Calu3 (cell line): ENCODE measurements at regions of chr4 and their contacts with region 1.

Region 1: DNA sequence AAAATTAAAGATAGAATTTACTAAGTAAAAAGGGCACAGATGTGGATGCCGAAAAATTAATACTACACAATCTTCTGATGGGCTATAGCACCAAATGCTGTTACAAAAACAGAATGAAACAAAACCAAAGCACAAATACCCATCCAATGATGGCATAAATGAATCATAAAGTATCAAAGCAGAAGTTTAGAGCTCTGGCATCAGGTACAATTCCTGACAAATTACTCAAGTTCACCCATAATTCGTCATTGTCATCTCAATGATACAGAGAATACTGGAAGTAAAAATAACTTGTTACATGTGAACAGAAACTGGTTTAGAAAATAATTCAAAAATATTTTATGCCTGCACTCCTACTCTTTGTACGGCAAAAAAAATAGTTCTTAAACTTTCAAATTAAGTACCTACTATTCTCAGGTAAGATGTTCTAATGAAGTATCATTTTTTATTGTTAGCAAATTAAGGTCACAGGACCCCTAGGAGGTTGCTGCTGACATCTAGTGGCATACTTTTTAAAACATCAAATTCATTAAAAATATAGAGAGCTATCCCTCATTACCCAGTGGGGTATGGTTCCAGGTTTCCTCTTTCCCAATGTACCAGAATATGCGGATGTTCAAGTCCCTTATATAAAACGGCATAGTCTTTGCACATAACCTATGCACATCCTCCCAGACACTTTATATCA is 126.1 kb downstream of the INPP4B start:
- DNase-seq: no peak
- H3K4me3 Mint-ChIP-seq: no peak overlapping the region
- H3K27ac Mint-ChIP-seq: no peak overlapping the region
- H3K4me1 Mint-ChIP-seq: peaks cover 15% of the 10 kb centered on the region
- H3K27me3 Mint-ChIP-seq: no peaks in the 10 kb centered on the region
- CTCF ChIP-seq: no peak

Region 2: GRCh38 chr4:142549726-142550463 is 170.1 kb before region 1 on chr4:
- CTCF ChIA-PET with region 1: no interaction called
- intact Hi-C with region 1: loop called (anchors 5 kb)
- DNase-seq: peak; percentile 72
- H3K4me3 Mint-ChIP-seq: no peak overlapping the region
- H3K27ac Mint-ChIP-seq: peak overlapping the region; percentile 99
- H3K4me1 Mint-ChIP-seq: peaks cover 62% of the 10 kb centered on the region
- H3K27me3 Mint-ChIP-seq: no peaks in the 10 kb centered on the region
- CTCF ChIP-seq: no peak

Region 3: DNA sequence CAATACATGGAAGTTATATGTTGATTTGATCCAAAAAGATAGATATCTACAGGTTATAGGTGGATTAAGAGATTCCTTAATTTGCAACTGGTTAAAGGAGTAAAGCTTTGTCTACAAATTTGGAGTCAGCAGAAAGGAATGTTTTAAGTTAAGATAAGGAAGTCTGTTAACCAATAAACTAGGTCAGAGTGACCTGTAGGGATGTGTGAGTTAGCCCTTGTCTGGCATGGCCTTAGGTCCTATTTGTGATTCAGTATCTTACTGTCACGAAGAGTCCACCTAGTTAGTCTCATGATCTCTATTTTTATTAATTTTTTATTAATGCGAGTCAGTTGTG is 104.7 kb before region 1 on chr4:
- CTCF ChIA-PET with region 1: no interaction called
- intact Hi-C with region 1: loop called (anchors 2 kb)
- DNase-seq: no peak
- H3K4me3 Mint-ChIP-seq: peak overlapping the region; percentile 31
- H3K27ac Mint-ChIP-seq: peak overlapping the region; percentile 91
- H3K4me1 Mint-ChIP-seq: peaks cover 28% of the 10 kb centered on the region
- H3K27me3 Mint-ChIP-seq: no peaks in the 10 kb centered on the region
- CTCF ChIP-seq: no peak

Region 4: GRCh38 chr4:142883040-142883832 is 163.2 kb after region 1 on chr4:
- CTCF ChIA-PET with region 1: no interaction called
- intact Hi-C with region 1: no loop called
- DNase-seq: peak; percentile 14
- H3K4me3 Mint-ChIP-seq: no peak overlapping the region
- H3K27ac Mint-ChIP-seq: no peak overlapping the region
- H3K4me1 Mint-ChIP-seq: no peaks in the 10 kb centered on the region
- H3K27me3 Mint-ChIP-seq: no peaks in the 10 kb centered on the region
- CTCF ChIP-seq: no peak